ENCODE measurements at regions of chr7 and their contacts with region 1.

Region 1: DNA sequence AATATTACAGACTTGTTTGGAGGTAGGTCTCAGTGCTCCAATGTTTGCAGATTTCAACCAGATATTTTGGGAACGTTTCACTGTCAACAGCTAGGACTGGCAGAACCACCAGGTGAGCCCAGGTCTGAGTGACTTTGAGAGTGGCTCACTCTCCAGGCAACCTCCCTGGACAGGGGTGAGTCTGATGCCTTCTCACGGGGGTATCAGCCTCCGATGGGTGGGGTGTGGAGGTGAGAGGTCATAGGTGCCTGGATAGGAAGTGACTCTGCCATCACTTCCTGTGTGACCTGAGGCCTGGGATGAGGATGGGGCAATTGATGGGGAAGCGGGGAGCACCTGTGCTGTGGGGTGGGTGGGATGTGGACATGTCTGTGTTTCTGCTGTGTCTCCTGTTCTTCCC is 4.6 kb downstream of the AZGP1 start:
- DNase-seq: no peak
- ATAC-seq: no peak
- H3K4me3 ChIP-seq: no peak overlapping the region
- H3K27ac ChIP-seq: no peak overlapping the region
- H3K4me1 ChIP-seq: no peaks in the 10 kb centered on the region
- H3K27me3 ChIP-seq: peaks cover 14% of the 10 kb centered on the region
- CTCF ChIP-seq: no peak
- POLR2A ChIP-seq: no peak
- RAD21 ChIP-seq: no peak

Region 2: DNA sequence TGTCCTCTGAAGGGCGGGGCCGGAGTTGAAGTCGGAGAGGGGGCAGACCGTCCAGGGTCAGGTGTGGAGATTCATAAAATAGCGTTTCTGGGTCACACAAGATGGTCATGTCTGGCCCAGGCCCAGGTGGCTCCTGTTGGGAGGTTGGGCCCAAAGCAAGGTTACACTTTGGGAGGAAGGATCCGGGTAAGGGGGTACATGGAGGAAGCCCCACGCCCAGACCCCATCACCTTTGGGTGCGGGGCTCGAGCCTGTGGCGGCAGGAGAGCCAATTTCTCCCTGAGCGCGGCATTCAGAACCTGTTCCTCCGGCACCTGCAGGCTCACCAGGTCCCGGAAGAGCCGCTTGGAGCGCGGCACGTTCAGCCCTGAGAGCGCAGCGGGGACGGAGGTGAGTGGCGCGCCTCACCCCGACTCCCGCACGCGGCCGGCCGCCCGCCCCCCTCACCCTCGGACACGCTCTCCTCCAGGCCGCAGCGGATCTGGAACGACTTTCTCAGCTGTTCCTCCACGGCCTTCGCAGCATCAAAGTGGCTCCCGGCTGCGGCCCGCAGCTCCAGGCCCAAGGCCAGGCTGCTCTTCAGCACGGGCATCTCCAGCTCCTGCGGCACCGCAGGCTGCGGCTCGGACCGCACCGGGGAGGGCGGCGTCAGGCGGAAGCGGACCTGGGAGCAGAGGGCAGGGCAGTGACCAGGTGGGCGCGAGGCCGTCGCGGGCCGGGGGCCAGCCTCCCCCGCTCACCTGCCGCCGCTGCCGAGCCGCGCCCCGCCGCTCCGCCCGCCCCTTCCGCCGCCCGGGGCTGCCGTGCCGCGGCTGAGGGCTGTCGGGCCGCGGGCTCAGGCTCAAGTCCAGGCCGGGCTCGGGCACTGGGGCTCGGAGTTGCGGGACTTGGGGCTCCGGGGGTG is 464.4 kb after region 1 on chr7:
- CTCF ChIA-PET with region 1: no interaction called
- POLR2A ChIA-PET with region 1: interaction called, 10 read pairs
- dilution Hi-C with region 1: no loop called
- in situ Hi-C with region 1: no loop called
- intact Hi-C with region 1: no loop called
- DNase-seq: no peak
- ATAC-seq: peak; percentile 33
- H3K4me3 ChIP-seq: peak overlapping the region; percentile 68
- H3K27ac ChIP-seq: peak overlapping the region; percentile 86
- H3K4me1 ChIP-seq: peaks cover 13% of the 10 kb centered on the region
- H3K27me3 ChIP-seq: no peaks in the 10 kb centered on the region
- CTCF ChIP-seq: no peak
- POLR2A ChIP-seq: no peak; the same call in 1 of the 2 replicates
- RAD21 ChIP-seq: no peak

Measured in IMR-90 (cell line).